ENCODE measurements at regions of chr15 and their contacts with region 1.

Region 1: DNA sequence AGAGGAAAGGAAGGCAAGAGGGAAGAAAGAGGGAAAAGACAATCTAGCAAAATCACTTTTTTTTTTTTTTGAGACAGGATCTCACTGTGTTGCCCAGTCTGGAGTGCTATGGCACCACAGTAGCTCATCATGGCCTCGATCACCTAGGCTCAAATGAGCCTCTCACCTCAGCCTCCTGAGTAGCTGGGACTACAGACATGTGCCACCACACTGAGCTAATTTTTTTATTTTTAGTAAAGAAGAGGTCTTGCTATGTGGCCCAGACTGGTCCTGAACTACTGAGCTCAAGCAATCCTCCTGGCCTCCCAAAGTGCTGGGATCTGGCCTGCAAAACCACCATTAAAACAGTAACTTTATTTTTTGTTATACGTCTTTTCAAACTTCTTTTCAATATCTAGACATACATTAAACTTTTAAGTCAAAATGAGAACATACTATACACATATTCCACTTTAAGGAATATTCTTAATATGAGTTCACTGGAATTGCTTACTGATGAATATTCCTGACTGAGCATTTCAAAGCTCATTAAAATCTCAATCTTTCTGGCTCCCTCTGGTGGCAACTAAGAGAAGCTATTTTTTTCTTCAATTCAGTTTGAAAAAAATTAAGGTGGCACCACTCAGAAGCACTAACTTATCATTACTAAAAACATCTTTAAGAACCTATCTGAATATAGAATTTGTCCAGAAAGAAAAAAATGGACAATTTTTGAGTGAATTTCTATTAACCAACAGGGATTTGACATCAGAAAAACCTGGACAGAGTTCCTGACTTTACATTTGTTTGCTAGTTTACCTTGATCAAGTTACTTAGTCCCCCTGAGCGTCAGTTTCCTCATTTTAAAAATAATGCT is 40.9 kb downstream of the UACA start:
- DNase-seq: no peak
- H3K4me3 Mint-ChIP-seq: no peak overlapping the region
- H3K27ac Mint-ChIP-seq: no peak overlapping the region
- H3K4me1 Mint-ChIP-seq: no peaks in the 10 kb centered on the region
- H3K27me3 Mint-ChIP-seq: peaks cover 17% of the 10 kb centered on the region

Region 2: GRCh38 chr15:70665599-70665998 is 56.9 kb before region 1 on chr15:
- CTCF ChIA-PET with region 1: interaction called, 14 read pairs
- POLR2A ChIA-PET with region 1: no interaction called
- DNase-seq: no peak
- H3K4me3 Mint-ChIP-seq: no peak overlapping the region
- H3K27ac Mint-ChIP-seq: no peak overlapping the region
- H3K4me1 Mint-ChIP-seq: peaks cover 5% of the 10 kb centered on the region
- H3K27me3 Mint-ChIP-seq: peaks cover 11% of the 10 kb centered on the region

Region 3: DNA sequence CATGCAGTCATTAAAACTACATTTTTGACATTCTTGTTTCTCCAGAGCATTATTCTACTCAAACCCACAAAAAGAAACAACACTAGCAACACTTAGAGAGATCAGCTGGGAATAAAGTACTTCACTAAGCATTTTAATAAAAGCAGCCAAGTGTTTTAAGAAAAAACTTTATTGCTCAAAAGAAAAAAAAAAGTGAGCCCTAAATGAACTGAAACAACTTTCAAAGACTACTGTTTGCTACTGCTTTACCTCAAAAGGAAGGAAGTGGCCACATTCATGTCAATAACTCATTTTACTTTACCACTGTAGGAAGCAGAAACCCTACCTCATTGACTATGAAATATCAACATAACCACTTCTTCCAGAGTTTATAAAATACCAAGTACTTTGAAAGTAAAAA is 50.4 kb before region 1 on chr15:
- CTCF ChIA-PET with region 1: interaction called, 35 read pairs
- POLR2A ChIA-PET with region 1: no interaction called
- DNase-seq: no peak
- H3K4me3 Mint-ChIP-seq: peak overlapping the region; percentile 38
- H3K27ac Mint-ChIP-seq: peak overlapping the region; percentile 17
- H3K4me1 Mint-ChIP-seq: peaks cover 24% of the 10 kb centered on the region
- H3K27me3 Mint-ChIP-seq: peaks cover 23% of the 10 kb centered on the region

Region 4: DNA sequence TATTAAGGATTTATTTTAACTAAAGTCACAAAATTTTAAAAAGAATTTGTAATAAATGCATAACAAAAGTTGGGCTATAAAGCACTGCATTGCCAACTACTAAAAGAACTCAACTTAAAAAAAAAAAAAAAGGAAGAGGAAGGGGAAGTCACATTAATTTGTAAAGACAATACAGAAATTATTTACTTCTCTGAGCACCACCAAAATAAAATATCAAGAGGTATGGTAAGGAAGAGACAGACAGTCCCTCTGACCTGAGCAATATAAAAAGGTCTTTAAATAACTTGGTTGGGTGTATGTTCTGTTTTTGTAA is 42.6 kb before region 1 on chr15:
- CTCF ChIA-PET with region 1: interaction called, 35 read pairs
- POLR2A ChIA-PET with region 1: no interaction called
- DNase-seq: no peak
- H3K4me3 Mint-ChIP-seq: no peak overlapping the region
- H3K27ac Mint-ChIP-seq: no peak overlapping the region
- H3K4me1 Mint-ChIP-seq: peaks cover 2% of the 10 kb centered on the region
- H3K27me3 Mint-ChIP-seq: peaks cover 33% of the 10 kb centered on the region